ENCODE measurements at regions of chr13 and their contacts with region 1.

Region 1: GRCh38 chr13:49443704-49444523 is at the starts of genes CAB39L and SETDB2:
- DNase-seq: peak; percentile 99
- ATAC-seq: peak; percentile 95
- H3K4me3 ChIP-seq: peak within 1 kb of the TSS; percentile 86
- H3K27ac ChIP-seq: peak within 1 kb of the TSS; percentile 76
- H3K4me1 ChIP-seq: peaks cover 5% of the 10 kb centered on the region; the same call in 1 of the 2 replicates
- H3K27me3 ChIP-seq: no peaks in the 10 kb centered on the region
- CTCF ChIP-seq: peak; percentile 35 to 47 (median 40); a peak in 4 of 6 replicates
- EP300 ChIP-seq: no peak
- POLR2A ChIP-seq: peak; percentile 98
- RAD21 ChIP-seq: no peak
- polyA plus RNA-seq, gene CAB39L: 0.88 to 1.6 TPM
- polyA plus RNA-seq, gene SETDB2: 1.2 to 1.4 TPM

Region 2: DNA sequence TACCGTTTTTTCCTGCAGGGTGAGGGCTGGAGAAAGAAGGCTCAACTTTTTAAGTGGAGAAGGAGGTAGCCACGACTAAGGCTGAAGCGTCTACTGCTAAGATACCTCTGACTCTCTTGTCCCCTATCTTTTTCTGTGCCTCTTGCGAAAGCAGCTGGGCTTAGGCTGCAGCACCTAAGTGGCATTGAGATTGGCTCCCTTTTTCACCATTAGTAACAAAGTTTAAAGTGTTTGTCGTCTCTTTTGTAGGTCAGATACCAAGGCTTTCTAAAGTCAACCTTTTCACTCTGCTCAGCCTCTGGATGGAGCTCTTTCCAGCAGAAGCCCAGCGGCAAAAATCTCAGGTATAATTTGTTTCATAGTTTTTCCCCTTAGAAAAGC is 195.3 kb before region 1 on chr13:
- CTCF ChIA-PET with region 1: no interaction called
- POLR2A ChIA-PET with region 1: no interaction called
- RAD21 ChIA-PET with region 1: no interaction called
- SMC1A ChIA-PET with region 1: no interaction called
- in situ Hi-C with region 1: no loop called
- intact Hi-C with region 1: no loop called
- DNase-seq: no peak
- ATAC-seq: peak; percentile 8
- H3K4me3 ChIP-seq: peak overlapping the region; percentile 93
- H3K27ac ChIP-seq: peak overlapping the region; percentile 78
- H3K4me1 ChIP-seq: no peaks in the 10 kb centered on the region
- H3K27me3 ChIP-seq: no peaks in the 10 kb centered on the region; a peak in 1 of 4 replicates
- CTCF ChIP-seq: peak; percentile 2 to 7 (median 4); a peak in 1 of 6 replicates
- EP300 ChIP-seq: no peak
- POLR2A ChIP-seq: no peak
- RAD21 ChIP-seq: peak; percentile 21; the same call in 1 of the 2 replicates

Region 3: DNA sequence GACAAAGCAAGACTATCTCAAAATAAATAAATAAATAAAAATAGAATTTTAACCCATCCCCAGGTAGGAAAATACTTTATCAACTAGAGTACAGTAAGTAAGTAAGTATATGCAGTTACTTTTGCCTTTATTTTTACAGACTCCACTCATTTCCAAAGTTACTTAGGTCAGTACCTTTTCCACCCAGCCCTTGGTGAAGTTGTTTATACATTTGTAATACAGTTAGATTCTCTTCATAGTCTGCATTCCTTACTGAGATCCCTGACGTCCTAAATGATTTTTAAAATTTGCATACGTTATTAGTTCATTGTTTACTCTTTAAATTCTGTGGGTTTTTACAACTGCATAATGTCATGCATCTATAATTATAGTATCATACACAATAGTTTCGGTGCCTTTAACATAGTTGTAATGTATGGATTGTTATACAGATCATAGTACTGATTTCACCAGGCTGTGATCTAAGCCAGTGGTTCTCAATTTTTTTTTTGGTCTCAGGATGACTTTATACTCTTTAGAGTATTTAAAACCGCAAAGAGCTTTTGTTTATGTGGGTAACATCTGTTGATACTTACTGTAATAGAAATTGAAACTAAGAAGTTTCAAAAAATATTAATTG is 10.6 kb after region 1 on chr13:
- CTCF ChIA-PET with region 1: interaction called, 5 read pairs
- POLR2A ChIA-PET with region 1: interaction called, 25 read pairs
- RAD21 ChIA-PET with region 1: interaction called, 6 read pairs
- SMC1A ChIA-PET with region 1: interaction called, 9 read pairs
- in situ Hi-C with region 1: no loop called
- intact Hi-C with region 1: no loop called
- DNase-seq: no peak
- ATAC-seq: peak; percentile 97
- H3K4me3 ChIP-seq: no peak overlapping the region
- H3K27ac ChIP-seq: peak overlapping the region; percentile 13; the same call in 1 of the 2 replicates
- H3K4me1 ChIP-seq: peaks cover 14% of the 10 kb centered on the region; the same call in 1 of the 2 replicates
- H3K27me3 ChIP-seq: no peaks in the 10 kb centered on the region
- CTCF ChIP-seq: no peak
- EP300 ChIP-seq: peak; percentile 78 to 85
- POLR2A ChIP-seq: no peak
- RAD21 ChIP-seq: no peak

Region 4: GRCh38 chr13:49495783-49496762 is 52.2 kb after region 1 on chr13 and contains the start of gene PHF11:
- CTCF ChIA-PET with region 1: interaction called, 13 read pairs
- POLR2A ChIA-PET with region 1: interaction called, 48 read pairs
- RAD21 ChIA-PET with region 1: interaction called, 22 read pairs
- SMC1A ChIA-PET with region 1: interaction called, 21 read pairs
- in situ Hi-C with region 1: no loop called
- intact Hi-C with region 1: loop called (anchors 2 kb)
- DNase-seq: peak; percentile 65
- ATAC-seq: peak; percentile 86
- H3K4me3 ChIP-seq: peak within 1 kb of the TSS; percentile 78
- H3K27ac ChIP-seq: peak within 1 kb of the TSS; percentile 94
- H3K4me1 ChIP-seq: peaks cover 6% of the 10 kb centered on the region
- H3K27me3 ChIP-seq: no peaks in the 10 kb centered on the region
- CTCF ChIP-seq: no peak
- EP300 ChIP-seq: no peak
- POLR2A ChIP-seq: peak; percentile 88
- RAD21 ChIP-seq: no peak
- polyA plus RNA-seq, gene PHF11: 16.9 to 23.0 TPM

Region 5: GRCh38 chr13:49585220-49586157 is 141.6 kb after region 1 on chr13 and contains the start of gene RCBTB1:
- CTCF ChIA-PET with region 1: interaction called, 3 read pairs
- POLR2A ChIA-PET with region 1: interaction called, 3 read pairs
- RAD21 ChIA-PET with region 1: no interaction called
- SMC1A ChIA-PET with region 1: no interaction called
- in situ Hi-C with region 1: no loop called
- intact Hi-C with region 1: loop called (anchors 2 kb)
- DNase-seq: no peak
- ATAC-seq: peak; percentile 99
- H3K4me3 ChIP-seq: peak within 1 kb of the TSS; percentile 66
- H3K27ac ChIP-seq: peak within 1 kb of the TSS; percentile 56; the same call in 1 of the 2 replicates
- H3K4me1 ChIP-seq: no peaks in the 10 kb centered on the region; the same call in 1 of the 2 replicates
- H3K27me3 ChIP-seq: no peaks in the 10 kb centered on the region
- CTCF ChIP-seq: no peak
- EP300 ChIP-seq: no peak
- POLR2A ChIP-seq: peak; percentile 81
- RAD21 ChIP-seq: no peak
- polyA plus RNA-seq, gene RCBTB1: 5.1 to 5.7 TPM

Region 6: GRCh38 chr13:49667773-49668172 is 223.9 kb after region 1 on chr13:
- CTCF ChIA-PET with region 1: no interaction called
- POLR2A ChIA-PET with region 1: no interaction called
- RAD21 ChIA-PET with region 1: no interaction called
- SMC1A ChIA-PET with region 1: no interaction called
- in situ Hi-C with region 1: no loop called
- intact Hi-C with region 1: no loop called
- DNase-seq: no peak
- ATAC-seq: no peak
- H3K4me3 ChIP-seq: no peak overlapping the region
- H3K27ac ChIP-seq: no peak overlapping the region
- H3K4me1 ChIP-seq: no peaks in the 10 kb centered on the region
- H3K27me3 ChIP-seq: no peaks in the 10 kb centered on the region
- CTCF ChIP-seq: no peak
- EP300 ChIP-seq: no peak
- POLR2A ChIP-seq: no peak
- RAD21 ChIP-seq: no peak

Region 7: DNA sequence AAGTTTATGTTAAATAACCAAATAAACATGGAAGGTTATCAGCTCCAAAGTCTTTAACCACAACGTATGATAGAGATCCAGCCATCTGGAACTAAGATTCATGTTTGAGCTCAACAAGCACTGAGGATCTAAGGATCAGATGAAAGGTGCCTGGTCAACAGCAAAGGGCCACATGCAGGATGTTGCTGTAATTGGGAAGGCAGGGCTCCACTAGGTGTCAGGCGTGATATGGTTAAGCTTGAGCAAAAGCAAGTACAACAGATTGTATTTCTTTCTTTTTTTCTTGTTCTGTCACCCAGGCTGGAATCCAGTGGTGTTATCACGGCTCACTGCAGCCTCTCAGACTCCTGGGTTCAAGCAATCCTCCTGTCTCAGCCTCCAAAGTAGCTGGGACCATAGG is 235.3 kb after region 1 on chr13:
- CTCF ChIA-PET with region 1: interaction called, 3 read pairs
- POLR2A ChIA-PET with region 1: no interaction called
- RAD21 ChIA-PET with region 1: no interaction called
- SMC1A ChIA-PET with region 1: no interaction called
- in situ Hi-C with region 1: no loop called
- intact Hi-C with region 1: loop called (anchors 10 kb)
- DNase-seq: no peak
- ATAC-seq: no peak; the same call in 2 of the 3 replicates
- H3K4me3 ChIP-seq: no peak overlapping the region
- H3K27ac ChIP-seq: no peak overlapping the region
- H3K4me1 ChIP-seq: peaks cover 12% of the 10 kb centered on the region
- H3K27me3 ChIP-seq: no peaks in the 10 kb centered on the region
- CTCF ChIP-seq: peak in 2 of 3 experiments; percentile 29 to 47; a peak in 3 of 6 replicates
- EP300 ChIP-seq: no peak
- POLR2A ChIP-seq: no peak
- RAD21 ChIP-seq: peak; percentile 70

Region 8: DNA sequence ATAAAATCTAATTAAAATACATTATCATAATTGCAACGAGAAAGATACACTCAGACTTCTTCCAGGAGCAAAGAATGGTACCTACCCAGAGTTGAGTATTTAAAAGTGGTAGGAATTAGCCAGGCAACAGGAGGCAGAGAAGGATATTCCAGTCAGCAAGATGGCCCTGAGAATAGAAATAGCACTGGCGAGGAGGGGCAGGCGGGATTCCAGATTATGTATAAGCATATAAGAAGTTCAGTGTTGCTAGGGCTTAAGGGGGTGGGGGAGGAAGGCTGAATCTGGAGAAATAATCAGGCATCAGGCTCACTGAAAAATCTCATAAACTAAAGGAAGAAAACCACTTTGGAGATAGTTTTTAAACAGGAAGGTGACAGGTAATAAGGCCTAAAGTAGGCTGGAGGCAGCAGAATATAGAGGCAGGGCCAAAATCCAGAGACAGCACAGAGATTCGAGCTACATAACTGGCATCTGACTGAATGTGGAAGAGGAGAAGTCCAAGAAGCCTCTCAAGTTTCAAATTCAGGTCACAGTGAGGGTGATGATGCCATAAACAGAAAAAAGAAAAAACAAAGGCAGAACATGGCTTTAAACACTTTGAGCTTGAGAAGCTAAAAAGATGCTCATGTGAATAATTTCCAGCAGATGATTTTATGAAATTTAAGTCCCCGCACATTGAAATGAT is 341.1 kb after region 1 on chr13:
- CTCF ChIA-PET with region 1: no interaction called
- POLR2A ChIA-PET with region 1: no interaction called
- RAD21 ChIA-PET with region 1: no interaction called
- SMC1A ChIA-PET with region 1: no interaction called
- in situ Hi-C with region 1: no loop called
- intact Hi-C with region 1: loop called (anchors 10 kb)
- DNase-seq: no peak
- ATAC-seq: no peak
- H3K4me3 ChIP-seq: no peak overlapping the region
- H3K27ac ChIP-seq: no peak overlapping the region
- H3K4me1 ChIP-seq: no peaks in the 10 kb centered on the region
- H3K27me3 ChIP-seq: no peaks in the 10 kb centered on the region
- CTCF ChIP-seq: no peak
- EP300 ChIP-seq: no peak
- POLR2A ChIP-seq: no peak
- RAD21 ChIP-seq: no peak

Measured in GM12878 (cell line).